HepG2 (cell line): ENCODE measurements at regions of chr17 and their contacts with region 1.

Region 1: GRCh38 chr17:38702166-38702899 is 2.7 kb upstream of the MLLT6 start:
- DNase-seq: peak; percentile 86
- ATAC-seq: peak; percentile 47
- H3K4me3 ChIP-seq: peak overlapping the region; percentile 63 to 99 (median 71)
- H3K27ac ChIP-seq: peak overlapping the region; percentile 99
- H3K4me1 ChIP-seq: peaks cover 67% of the 10 kb centered on the region
- H3K27me3 ChIP-seq: no peaks in the 10 kb centered on the region; a peak in 1 of 5 replicates
- CTCF ChIP-seq: 0 out of 2 replicates have a peak, but pooled peaks have one; percentile 2
- EP300 ChIP-seq: peak in 1 of 2 experiments; percentile 7; a peak in 2 of 4 replicates
- POLR2A ChIP-seq: peak; percentile 77 to 94
- RAD21 ChIP-seq: peak; percentile 23; the same call in 1 of the 2 replicates

Region 2: GRCh38 chr17:38605888-38606645 is 96.3 kb before region 1 on chr17 and contains the start of gene SRCIN1:
- CTCF ChIA-PET with region 1: no interaction called
- POLR2A ChIA-PET with region 1: interaction called, 12 read pairs
- in situ Hi-C with region 1: no loop called
- intact Hi-C with region 1: no loop called
- DNase-seq: peak; percentile 57
- ATAC-seq: peak; percentile 42
- H3K4me3 ChIP-seq: peak within 1 kb of the TSS; percentile 76 to 84 (median 83)
- H3K27ac ChIP-seq: peak within 1 kb of the TSS; percentile 88
- H3K4me1 ChIP-seq: peaks cover 89% of the 10 kb centered on the region
- H3K27me3 ChIP-seq: no peaks in the 10 kb centered on the region
- CTCF ChIP-seq: peak; percentile 95
- EP300 ChIP-seq: 0 out of 4 replicates have a peak, but pooled peaks have one; percentile 28 to 30
- POLR2A ChIP-seq: peak; percentile 45 to 62; a peak in 3 of 4 replicates
- RAD21 ChIP-seq: peak; percentile 100
- total RNA-seq, gene SRCIN1: 0.90 and 1.2 TPM in 2 replicates

Region 3: GRCh38 chr17:38674749-38675615 is 27.4 kb before region 1 on chr17 and contains the start of gene EPOP:
- CTCF ChIA-PET with region 1: interaction called, 3 read pairs
- POLR2A ChIA-PET with region 1: interaction called, 88 read pairs
- in situ Hi-C with region 1: no loop called
- intact Hi-C with region 1: loop called (anchors 1 kb)
- DNase-seq: peak; percentile 86
- ATAC-seq: peak; percentile 82
- H3K4me3 ChIP-seq: peak within 1 kb of the TSS; percentile 75 to 94 (median 89)
- H3K27ac ChIP-seq: peak within 1 kb of the TSS; percentile 60
- H3K4me1 ChIP-seq: peaks cover 77% of the 10 kb centered on the region
- H3K27me3 ChIP-seq: peaks cover 2 to 6% of the 10 kb centered on the region in 2 experiments; a peak in 4 of 5 replicates
- CTCF ChIP-seq: 0 out of 2 replicates have a peak, but pooled peaks have one; percentile 8
- EP300 ChIP-seq: 0 out of 4 replicates have a peak, but pooled peaks of 1 of the 2 experiments have one; percentile 5
- POLR2A ChIP-seq: peak; percentile 69 to 88
- RAD21 ChIP-seq: 0 out of 2 replicates have a peak, but pooled peaks have one; percentile 5
- total RNA-seq, gene EPOP: 29.0 and 37.8 TPM in 2 replicates

Region 4: GRCh38 chr17:38724337-38724988 is 22.1 kb after region 1 on chr17:
- CTCF ChIA-PET with region 1: interaction called, 4 read pairs
- POLR2A ChIA-PET with region 1: interaction called, 92 read pairs
- in situ Hi-C with region 1: no loop called
- intact Hi-C with region 1: no loop called
- DNase-seq: no peak
- ATAC-seq: no peak
- H3K4me3 ChIP-seq: no peak overlapping the region
- H3K27ac ChIP-seq: no peak overlapping the region
- H3K4me1 ChIP-seq: peaks cover 26% of the 10 kb centered on the region
- H3K27me3 ChIP-seq: no peaks in the 10 kb centered on the region
- CTCF ChIP-seq: no peak
- EP300 ChIP-seq: no peak
- POLR2A ChIP-seq: no peak
- RAD21 ChIP-seq: no peak

Region 5: DNA sequence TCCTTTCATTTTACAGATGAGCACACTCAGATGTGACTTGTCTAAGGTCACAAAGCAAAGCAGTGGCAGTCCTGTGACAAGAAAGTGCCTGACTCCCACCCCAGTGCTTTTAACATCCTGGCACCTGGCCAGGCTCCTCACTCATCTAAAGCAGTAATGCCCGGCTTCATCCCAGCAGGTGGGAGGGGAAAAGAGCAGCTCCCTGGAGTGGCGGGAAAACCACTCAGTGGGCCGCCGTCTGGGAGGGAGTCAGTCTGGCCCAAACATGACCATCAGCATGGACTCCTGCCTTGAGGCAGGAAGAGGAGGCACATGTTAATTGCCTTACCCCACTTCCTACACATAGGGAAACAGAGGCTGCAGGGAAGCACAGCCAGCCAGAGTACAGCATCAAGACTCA is 43.2 kb after region 1 on chr17:
- CTCF ChIA-PET with region 1: no interaction called
- POLR2A ChIA-PET with region 1: interaction called, 21 read pairs
- in situ Hi-C with region 1: no loop called
- intact Hi-C with region 1: no loop called
- DNase-seq: peak; percentile 29
- ATAC-seq: no peak
- H3K4me3 ChIP-seq: peak overlapping the region in 2 of 3 experiments; percentile 21 to 84; a peak in 3 of 6 replicates
- H3K27ac ChIP-seq: peak overlapping the region; percentile 84
- H3K4me1 ChIP-seq: peaks cover 64% of the 10 kb centered on the region
- H3K27me3 ChIP-seq: no peaks in the 10 kb centered on the region
- CTCF ChIP-seq: no peak
- EP300 ChIP-seq: no peak
- POLR2A ChIP-seq: no peak
- RAD21 ChIP-seq: no peak

Region 6: GRCh38 chr17:38799378-38800236 is 97.3 kb after region 1 on chr17 and contains the start of gene PIP4K2B:
- CTCF ChIA-PET with region 1: no interaction called
- POLR2A ChIA-PET with region 1: no interaction called
- in situ Hi-C with region 1: no loop called
- intact Hi-C with region 1: no loop called
- DNase-seq: peak; percentile 98
- ATAC-seq: peak; percentile 92
- H3K4me3 ChIP-seq: peak within 1 kb of the TSS; percentile 76 to 98 (median 90)
- H3K27ac ChIP-seq: peak within 1 kb of the TSS; percentile 99
- H3K4me1 ChIP-seq: peaks cover 39% of the 10 kb centered on the region
- H3K27me3 ChIP-seq: no peaks in the 10 kb centered on the region
- CTCF ChIP-seq: 0 out of 2 replicates have a peak, but pooled peaks have one; percentile 12
- EP300 ChIP-seq: peak in 1 of 2 experiments; percentile 9; a peak in 2 of 4 replicates
- POLR2A ChIP-seq: peak in 1 of 2 experiments; percentile 79; a peak in 3 of 4 replicates
- RAD21 ChIP-seq: peak; percentile 61
- total RNA-seq, gene PIP4K2B: 54.0 and 63.6 TPM in 2 replicates

Region 7: DNA sequence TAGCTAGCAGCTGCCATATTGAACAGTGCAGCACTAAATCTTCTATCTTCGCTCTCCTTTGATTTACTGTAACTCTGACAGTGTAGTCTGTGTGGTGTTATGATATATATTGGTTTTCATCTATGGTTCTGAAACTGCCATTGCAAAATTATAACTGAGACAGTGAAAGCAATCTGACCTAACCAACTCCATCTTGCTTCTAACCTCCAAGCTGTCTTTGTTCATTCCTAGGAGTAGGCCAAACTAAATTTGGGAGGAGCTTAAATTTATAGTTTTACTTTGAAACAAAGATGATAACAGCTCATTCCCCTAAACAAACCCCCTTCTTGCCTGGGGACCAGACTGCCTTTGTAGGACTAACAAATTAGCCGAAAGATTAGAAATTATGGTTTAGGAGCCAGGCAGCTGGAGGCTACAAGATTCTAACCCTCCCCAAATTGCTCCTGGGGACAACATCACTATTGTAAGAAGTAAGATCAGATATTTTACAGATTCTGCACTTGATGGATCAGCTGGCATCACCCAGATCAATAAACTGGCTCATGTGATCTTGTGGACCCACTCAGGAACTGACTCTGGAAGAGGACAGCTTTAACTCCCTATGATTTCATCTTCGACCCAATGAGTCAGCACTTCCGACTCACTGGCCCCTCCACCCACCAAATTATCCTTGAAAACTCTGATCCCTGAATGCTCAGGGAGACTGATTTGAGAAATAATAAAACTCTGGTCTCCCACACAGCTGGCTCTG is 311.9 kb after region 1 on chr17:
- CTCF ChIA-PET with region 1: no interaction called
- POLR2A ChIA-PET with region 1: no interaction called
- in situ Hi-C with region 1: no loop called
- intact Hi-C with region 1: no loop called
- DNase-seq: peak; percentile 39
- ATAC-seq: peak; percentile 32
- H3K4me3 ChIP-seq: no peak overlapping the region
- H3K27ac ChIP-seq: no peak overlapping the region
- H3K4me1 ChIP-seq: peaks cover 16% of the 10 kb centered on the region
- H3K27me3 ChIP-seq: peaks cover 3 to 16% of the 10 kb centered on the region in 2 experiments; a peak in 2 of 5 replicates
- CTCF ChIP-seq: no peak
- EP300 ChIP-seq: no peak
- POLR2A ChIP-seq: no peak
- RAD21 ChIP-seq: no peak